T-cell (primary cell): ENCODE measurements at regions of chr16 and their contacts with region 1.

Region 1: DNA sequence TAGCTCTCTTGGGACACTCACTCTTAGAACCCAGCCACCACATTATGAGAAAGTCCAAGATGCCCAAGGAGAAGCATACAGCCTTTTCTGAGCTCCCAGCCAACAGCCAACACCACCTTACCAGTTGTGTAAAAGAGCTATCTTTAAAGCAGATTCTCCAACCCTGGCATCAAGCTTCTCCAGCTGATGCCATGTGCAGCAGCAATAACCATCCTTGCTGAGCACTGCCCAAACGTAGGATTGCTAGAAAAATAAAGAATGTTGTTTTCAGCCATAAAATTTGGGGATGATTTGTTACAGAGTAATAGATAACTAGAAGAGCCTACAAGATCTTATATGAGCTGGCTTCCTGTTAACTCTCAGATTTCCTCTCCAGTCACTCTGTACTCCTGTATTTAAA is 443.7 kb upstream of the DYNLRB2 start:
- DNase-seq: no peak
- ATAC-seq: no peak
- H3K4me3 ChIP-seq: no peak overlapping the region
- H3K4me3 Mint-ChIP-seq: no peak overlapping the region
- H3K27ac ChIP-seq: no peak overlapping the region
- H3K27ac Mint-ChIP-seq: no peak overlapping the region
- H3K4me1 ChIP-seq: no peaks in the 10 kb centered on the region
- H3K4me1 Mint-ChIP-seq: peaks cover 0 to 1% (median 0%) of the 10 kb centered on the region in 3 donors
- H3K27me3 ChIP-seq: peaks cover 0 to 4% of the 10 kb centered on the region in 2 experiments
- H3K27me3 Mint-ChIP-seq: peaks cover 15 to 16% of the 10 kb centered on the region in 2 donors

Region 2: GRCh38 chr16:79269211-79269863 is 827.8 kb before region 1 on chr16:
- CTCF ChIA-PET with region 1: no interaction called
- POLR2A ChIA-PET with region 1: interaction called in 1 of 2 experiments, 10 read pairs
- DNase-seq: peak in 12 of 35 experiments; percentile 8 to 58 (median 15)
- ATAC-seq: peak; percentile 20 to 41 (median 23)
- H3K4me3 ChIP-seq: peak overlapping the region in 1 of 2 donors; percentile 49
- H3K4me3 Mint-ChIP-seq: peak overlapping the region; percentile 13 to 65 (median 64)
- H3K27ac ChIP-seq: peak overlapping the region; percentile 14
- H3K27ac Mint-ChIP-seq: peak overlapping the region; percentile 71 to 87
- H3K4me1 ChIP-seq: peaks cover 39 to 67% of the 10 kb centered on the region in 2 experiments
- H3K4me1 Mint-ChIP-seq: peaks cover 63 to 77% (median 73%) of the 10 kb centered on the region in 3 donors
- H3K27me3 ChIP-seq: peaks cover 0 to 5% of the 10 kb centered on the region in 2 experiments
- H3K27me3 Mint-ChIP-seq: peaks cover 6 to 18% of the 10 kb centered on the region in 2 donors